CD4-positive, alpha-beta memory T cell (primary cell): ENCODE measurements at regions of chr16 and their contacts with region 1.

Region 1: GRCh38 chr16:87393680-87394055 is 1.5 kb downstream of the MAP1LC3B start:
- DNase-seq: no peak
- H3K4me3 ChIP-seq: peak overlapping the region in 1 of 2 donors; percentile 81
- H3K4me3 Mint-ChIP-seq: peak overlapping the region; percentile 88 to 98 (median 94)
- H3K27ac ChIP-seq: peak overlapping the region; percentile 82
- H3K27ac Mint-ChIP-seq: peak overlapping the region; percentile 88 to 96 (median 94)
- H3K4me1 ChIP-seq: peaks cover 47% of the 10 kb centered on the region
- H3K4me1 Mint-ChIP-seq: peaks cover 32 to 62% (median 47%) of the 10 kb centered on the region in 4 donors
- H3K27me3 ChIP-seq: no peaks in the 10 kb centered on the region
- H3K27me3 Mint-ChIP-seq: no peaks in the 10 kb centered on the region

Region 2: GRCh38 chr16:87161822-87162676 is 231.6 kb before region 1 on chr16:
- CTCF ChIA-PET with region 1: no interaction called
- POLR2A ChIA-PET with region 1: no interaction called
- intact Hi-C with region 1: no loop called
- DNase-seq: no peak
- H3K4me3 ChIP-seq: no peak overlapping the region
- H3K4me3 Mint-ChIP-seq: peak overlapping the region in 1 of 8 donors; percentile 8
- H3K27ac ChIP-seq: no peak overlapping the region
- H3K27ac Mint-ChIP-seq: peak overlapping the region in 1 of 7 donors; percentile 93
- H3K4me1 ChIP-seq: no peaks in the 10 kb centered on the region
- H3K4me1 Mint-ChIP-seq: peaks cover 0 to 2% (median 0%) of the 10 kb centered on the region in 4 donors
- H3K27me3 ChIP-seq: no peaks in the 10 kb centered on the region
- H3K27me3 Mint-ChIP-seq: peaks cover 4 to 5% of the 10 kb centered on the region in 2 donors

Region 3: GRCh38 chr16:87316923-87317749 is 76.5 kb before region 1 on chr16 and contains the start of gene C16orf95:
- CTCF ChIA-PET with region 1: interaction called, 41 read pairs
- POLR2A ChIA-PET with region 1: interaction called, 40 read pairs
- intact Hi-C with region 1: loop called (anchors 1 kb)
- DNase-seq: peak; percentile 95 to 99 (median 95)
- H3K4me3 ChIP-seq: peak within 1 kb of the TSS; percentile 64 to 88
- H3K4me3 Mint-ChIP-seq: peak within 1 kb of the TSS; percentile 91 to 97 (median 95)
- H3K27ac ChIP-seq: peak within 1 kb of the TSS; percentile 77
- H3K27ac Mint-ChIP-seq: peak within 1 kb of the TSS; percentile 93 to 98 (median 95)
- H3K4me1 ChIP-seq: peaks cover 9% of the 10 kb centered on the region
- H3K4me1 Mint-ChIP-seq: peaks cover 10 to 21% (median 15%) of the 10 kb centered on the region in 4 donors
- H3K27me3 ChIP-seq: no peaks in the 10 kb centered on the region
- H3K27me3 Mint-ChIP-seq: no peaks in the 10 kb centered on the region
- total RNA-seq, gene C16orf95: 1.6 TPM

Region 4: DNA sequence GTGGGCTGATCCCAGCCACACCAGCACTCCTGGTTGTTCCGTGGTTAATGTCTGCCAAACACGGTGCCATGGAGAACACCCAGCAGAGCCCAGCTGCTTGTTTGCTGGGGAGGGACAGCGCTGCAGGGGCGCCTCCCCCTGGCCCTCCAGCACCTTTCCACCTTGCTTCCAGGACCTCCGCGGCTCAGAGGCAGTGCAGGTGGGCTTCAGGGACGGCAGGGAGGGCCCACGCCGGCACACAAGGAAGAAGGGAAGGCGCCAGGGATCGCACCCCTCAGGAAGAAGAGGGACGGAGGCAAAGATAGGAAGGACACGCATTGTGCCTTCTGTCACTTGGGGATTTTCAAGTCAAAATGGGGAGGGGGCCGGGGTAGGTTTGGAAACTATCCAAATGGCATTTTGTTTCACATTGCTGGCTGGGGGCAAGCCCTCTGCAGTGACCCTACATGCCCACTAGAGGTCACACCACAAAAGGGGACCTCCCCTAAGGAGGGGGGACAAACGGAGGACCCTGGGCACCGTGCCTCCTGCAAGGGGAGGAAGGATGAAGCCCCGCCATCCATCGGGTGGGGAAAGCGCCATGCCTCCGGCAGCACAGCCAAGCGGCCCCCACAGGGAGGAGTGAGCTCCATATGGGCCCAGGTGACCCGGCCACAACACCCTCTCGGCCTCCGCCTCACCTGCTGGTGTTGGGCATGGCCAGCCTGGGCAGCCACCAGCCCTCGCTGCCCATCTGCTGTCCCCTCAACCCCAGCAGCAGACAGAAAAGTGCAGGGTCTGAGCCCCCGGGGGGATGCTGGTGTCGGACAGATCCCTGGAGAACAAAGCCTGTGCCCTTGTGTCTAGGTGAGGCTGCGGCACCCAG is 69.0 kb before region 1 on chr16:
- CTCF ChIA-PET with region 1: interaction called, 41 read pairs
- POLR2A ChIA-PET with region 1: interaction called, 32 read pairs
- intact Hi-C with region 1: loop called (anchors 1 kb)
- DNase-seq: peak in 4 of 5 donors; percentile 31 to 45 (median 34)
- H3K4me3 ChIP-seq: no peak overlapping the region
- H3K4me3 Mint-ChIP-seq: no peak overlapping the region
- H3K27ac ChIP-seq: no peak overlapping the region
- H3K27ac Mint-ChIP-seq: peak overlapping the region in 1 of 7 donors; percentile 57
- H3K4me1 ChIP-seq: peaks cover 4% of the 10 kb centered on the region
- H3K4me1 Mint-ChIP-seq: peaks cover 3 to 9% (median 4%) of the 10 kb centered on the region in 4 donors
- H3K27me3 ChIP-seq: no peaks in the 10 kb centered on the region
- H3K27me3 Mint-ChIP-seq: no peaks in the 10 kb centered on the region

Region 5: DNA sequence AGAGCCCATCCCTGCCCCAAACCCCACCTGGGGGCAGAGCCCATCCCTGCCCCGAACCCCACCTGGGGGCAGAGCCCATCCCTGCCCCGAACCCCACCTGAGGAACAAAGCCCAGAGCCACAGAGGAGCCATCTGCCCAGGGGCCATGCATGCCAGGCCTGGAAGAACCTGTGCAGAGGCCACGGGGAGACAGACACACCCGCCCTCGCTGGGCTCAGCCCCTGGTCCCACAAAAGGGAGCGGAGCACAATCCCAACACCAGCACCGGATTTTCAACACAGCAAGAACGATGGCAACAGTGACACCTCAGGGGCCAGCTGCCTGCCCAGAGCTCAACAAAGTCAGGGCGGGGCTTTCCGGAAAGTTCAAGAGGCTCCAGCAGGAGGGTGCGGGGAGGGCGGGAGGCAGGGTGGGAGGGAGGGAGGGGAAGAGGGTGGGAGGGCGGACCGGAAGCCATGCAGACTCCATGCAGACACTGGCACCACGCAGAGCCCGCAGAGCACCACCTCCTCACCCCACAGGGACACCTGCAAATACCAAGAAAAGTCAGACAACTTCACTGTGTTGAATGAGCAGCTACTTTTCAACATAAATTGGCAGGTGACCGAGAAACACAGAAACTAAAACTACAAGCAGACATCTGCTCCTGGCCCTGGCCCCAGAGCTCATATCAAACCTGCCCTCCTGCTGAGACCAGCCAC is 48.6 kb before region 1 on chr16:
- CTCF ChIA-PET with region 1: interaction called, 5 read pairs
- POLR2A ChIA-PET with region 1: no interaction called
- intact Hi-C with region 1: loop called (anchors 1 kb)
- DNase-seq: peak; percentile 2 to 75 (median 47)
- H3K4me3 ChIP-seq: no peak overlapping the region
- H3K4me3 Mint-ChIP-seq: peak overlapping the region in 7 of 8 donors; percentile 51 to 78 (median 68)
- H3K27ac ChIP-seq: no peak overlapping the region
- H3K27ac Mint-ChIP-seq: peak overlapping the region; percentile 72 to 97 (median 93)
- H3K4me1 ChIP-seq: peaks cover 20% of the 10 kb centered on the region
- H3K4me1 Mint-ChIP-seq: peaks cover 14 to 45% (median 24%) of the 10 kb centered on the region in 4 donors
- H3K27me3 ChIP-seq: no peaks in the 10 kb centered on the region
- H3K27me3 Mint-ChIP-seq: no peaks in the 10 kb centered on the region

Region 6: DNA sequence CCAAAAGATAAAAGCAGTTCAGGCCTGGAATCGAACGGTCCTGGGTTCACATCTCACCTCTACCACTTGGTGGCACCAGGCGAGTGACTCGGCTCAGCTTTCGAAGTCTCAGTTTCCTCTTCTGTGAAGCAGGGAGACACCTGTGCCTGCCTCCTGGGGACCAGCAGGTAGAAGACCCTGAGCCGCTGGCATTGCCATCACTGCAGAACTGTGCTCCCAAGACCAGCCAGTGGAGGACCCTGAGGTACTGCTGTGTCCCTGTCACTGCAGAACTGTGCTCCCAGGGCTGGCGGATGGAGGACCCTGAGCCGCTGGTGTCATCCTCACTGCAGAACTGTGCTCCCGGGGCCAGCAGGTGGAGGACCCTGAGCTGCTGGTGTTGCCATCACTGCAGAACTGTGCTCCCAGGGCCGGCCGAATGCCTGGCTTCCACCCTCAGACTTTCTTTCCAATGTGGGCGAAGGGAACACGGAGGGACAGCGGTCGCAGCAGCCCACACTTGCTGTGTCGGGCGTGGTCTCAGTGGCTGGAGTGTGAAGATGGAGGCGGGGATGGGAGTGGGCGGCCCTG is 484.4 kb after region 1 on chr16:
- CTCF ChIA-PET with region 1: no interaction called
- POLR2A ChIA-PET with region 1: no interaction called
- intact Hi-C with region 1: no loop called
- DNase-seq: no peak
- H3K4me3 ChIP-seq: no peak overlapping the region
- H3K4me3 Mint-ChIP-seq: no peak overlapping the region
- H3K27ac ChIP-seq: no peak overlapping the region
- H3K27ac Mint-ChIP-seq: no peak overlapping the region
- H3K4me1 ChIP-seq: peaks cover 13% of the 10 kb centered on the region
- H3K4me1 Mint-ChIP-seq: peaks cover 6 to 11% (median 9%) of the 10 kb centered on the region in 4 donors
- H3K27me3 ChIP-seq: no peaks in the 10 kb centered on the region
- H3K27me3 Mint-ChIP-seq: peaks cover 2% of the 10 kb centered on the region in 2 donors